HepG2 (cell line): ENCODE measurements at regions of chr2 and their contacts with region 1.

Region 1: GRCh38 chr2:88590998-88591613 is 36.2 kb downstream of the EIF2AK3 start:
- DNase-seq: peak; percentile 65
- ATAC-seq: peak; percentile 96
- H3K4me3 ChIP-seq: no peak overlapping the region
- H3K27ac ChIP-seq: no peak overlapping the region
- H3K4me1 ChIP-seq: no peaks in the 10 kb centered on the region
- H3K27me3 ChIP-seq: no peaks in the 10 kb centered on the region
- CTCF ChIP-seq: peak; percentile 83
- EP300 ChIP-seq: no peak
- POLR2A ChIP-seq: no peak
- RAD21 ChIP-seq: peak; percentile 60

Region 2: DNA sequence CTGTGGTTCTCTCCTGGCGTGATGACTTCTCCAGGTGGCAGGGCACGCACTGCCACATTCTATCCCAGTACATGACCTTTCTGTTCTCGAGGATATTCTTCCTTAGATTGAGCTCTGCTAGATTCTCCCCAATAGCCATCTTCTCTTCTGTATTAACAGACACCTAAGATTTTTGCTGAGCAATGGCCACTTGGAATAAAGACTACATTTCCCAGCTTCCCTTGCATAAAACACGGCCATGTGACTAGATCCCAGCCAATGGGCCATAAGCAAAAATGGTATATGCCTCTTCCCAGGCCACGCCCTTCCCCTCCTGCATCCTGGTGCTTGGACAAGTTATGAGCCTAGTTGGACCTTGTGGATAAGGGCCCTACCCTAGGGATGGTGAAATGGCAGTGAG is 46.0 kb before region 1 on chr2:
- CTCF ChIA-PET with region 1: no interaction called
- POLR2A ChIA-PET with region 1: no interaction called
- in situ Hi-C with region 1: no loop called
- intact Hi-C with region 1: no loop called
- DNase-seq: peak; percentile 40
- ATAC-seq: peak; percentile 70
- H3K4me3 ChIP-seq: no peak overlapping the region
- H3K27ac ChIP-seq: no peak overlapping the region
- H3K4me1 ChIP-seq: no peaks in the 10 kb centered on the region
- H3K27me3 ChIP-seq: peaks cover 2 to 5% of the 10 kb centered on the region in 2 experiments; a peak in 3 of 5 replicates
- CTCF ChIP-seq: no peak
- EP300 ChIP-seq: no peak
- POLR2A ChIP-seq: no peak
- RAD21 ChIP-seq: no peak

Region 3: GRCh38 chr2:88606371-88607030 is 15.4 kb after region 1 on chr2:
- CTCF ChIA-PET with region 1: no interaction called
- POLR2A ChIA-PET with region 1: no interaction called
- in situ Hi-C with region 1: no loop called
- intact Hi-C with region 1: no loop called
- DNase-seq: no peak
- ATAC-seq: no peak
- H3K4me3 ChIP-seq: no peak overlapping the region
- H3K27ac ChIP-seq: no peak overlapping the region
- H3K4me1 ChIP-seq: no peaks in the 10 kb centered on the region
- H3K27me3 ChIP-seq: no peaks in the 10 kb centered on the region
- CTCF ChIP-seq: no peak
- EP300 ChIP-seq: no peak
- POLR2A ChIP-seq: no peak
- RAD21 ChIP-seq: no peak

Region 4: GRCh38 chr2:88669371-88670214 is 78.5 kb after region 1 on chr2:
- CTCF ChIA-PET with region 1: interaction called, 139 read pairs
- POLR2A ChIA-PET with region 1: no interaction called
- in situ Hi-C with region 1: loop called (anchors 5 kb)
- intact Hi-C with region 1: loop called (anchors 1 kb)
- DNase-seq: peak; percentile 58
- ATAC-seq: peak; percentile 84
- H3K4me3 ChIP-seq: no peak overlapping the region
- H3K27ac ChIP-seq: no peak overlapping the region
- H3K4me1 ChIP-seq: peaks cover 13% of the 10 kb centered on the region
- H3K27me3 ChIP-seq: no peaks in the 10 kb centered on the region
- CTCF ChIP-seq: peak; percentile 80
- EP300 ChIP-seq: no peak
- POLR2A ChIP-seq: no peak
- RAD21 ChIP-seq: peak; percentile 59; the same call in 1 of the 2 replicates